WTC11 (cell line): ENCODE measurements at regions of chr4 and their contacts with region 1.

Region 1: DNA sequence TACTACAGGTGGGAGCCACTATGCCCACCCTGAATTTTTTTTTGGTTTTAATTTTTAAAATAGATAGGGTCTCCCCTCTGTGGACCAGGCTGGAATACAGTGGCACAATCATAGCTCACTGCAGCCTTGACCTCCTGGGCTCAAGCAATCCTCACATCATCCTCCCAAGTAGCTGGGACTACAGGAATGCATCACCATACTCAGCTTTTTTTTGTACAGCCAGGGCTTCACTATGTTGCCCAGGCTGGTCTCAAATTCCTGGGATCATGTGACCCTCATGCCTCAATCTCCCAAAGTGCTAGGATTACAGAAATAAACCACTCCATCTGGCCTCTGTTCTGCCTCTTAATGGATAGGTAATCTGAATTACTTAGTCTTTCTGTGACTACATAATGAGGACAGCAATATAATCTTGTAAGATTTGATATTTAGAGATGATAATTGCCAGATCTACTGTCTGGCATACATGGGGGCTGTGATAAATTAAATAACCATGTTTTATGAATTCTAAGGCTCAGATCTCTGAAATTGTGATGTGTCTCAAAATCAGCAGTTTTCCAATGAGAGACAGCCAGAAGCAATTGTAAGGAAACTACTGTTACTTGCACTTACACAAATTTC is 26.7 kb downstream of the PDS5A start:
- DNase-seq: no peak
- ATAC-seq: no peak
- H3K4me3 Mint-ChIP-seq: no peak overlapping the region
- H3K27ac Mint-ChIP-seq: peak overlapping the region; percentile 54; the same call in 1 of the 2 replicates
- H3K4me1 Mint-ChIP-seq: peaks cover 11% of the 10 kb centered on the region
- H3K27me3 Mint-ChIP-seq: no peaks in the 10 kb centered on the region
- CTCF ChIP-seq: no peak

Region 2: DNA sequence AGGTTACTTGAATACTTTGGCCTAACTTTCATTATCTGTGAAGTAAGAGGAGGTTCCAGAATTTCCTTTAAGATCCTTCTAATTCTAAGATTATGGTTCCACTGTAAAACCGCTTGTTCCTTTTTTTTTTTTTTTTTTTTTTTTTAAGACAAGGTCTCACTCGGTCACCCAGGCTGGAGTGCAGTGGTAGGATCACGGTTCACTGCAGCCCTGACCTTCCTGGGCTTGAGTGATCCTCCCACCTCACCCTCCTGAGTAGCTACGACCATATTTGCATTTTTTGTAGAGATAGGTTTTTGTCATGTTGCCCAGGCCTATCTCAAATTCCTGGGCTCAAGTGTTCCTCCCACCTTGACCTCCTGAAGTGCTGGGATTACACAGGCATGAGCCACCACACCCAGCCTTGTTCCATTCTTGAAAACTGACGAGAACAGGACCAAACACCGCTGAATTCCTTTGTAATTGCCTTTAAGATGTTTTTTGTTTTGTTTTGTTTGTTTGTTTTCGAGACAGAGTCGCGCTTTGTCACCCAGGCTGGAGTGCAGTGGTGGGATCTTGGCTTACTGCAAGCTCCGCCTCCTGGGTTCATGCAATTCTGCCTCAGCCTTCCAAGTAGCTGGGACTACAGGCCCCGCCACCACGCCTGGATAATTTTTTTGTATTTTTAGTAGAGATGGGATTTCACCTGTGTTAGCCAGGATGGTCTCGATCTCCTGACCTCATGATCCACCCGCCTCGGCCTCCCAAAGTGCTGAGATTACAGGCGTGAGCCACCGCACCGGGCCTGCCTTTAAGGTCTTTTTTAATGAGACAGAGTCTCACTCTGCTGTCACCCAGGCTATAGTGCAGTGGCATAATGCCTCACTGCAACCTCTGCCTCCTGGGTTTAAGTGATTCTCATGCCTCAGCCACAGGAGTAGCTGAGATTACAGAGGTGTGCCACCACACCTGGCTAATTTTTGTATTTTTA is 20.0 kb after region 1 on chr4:
- CTCF ChIA-PET with region 1: no interaction called
- POLR2A ChIA-PET with region 1: interaction called, 16 read pairs
- DNase-seq: peak; percentile 17
- ATAC-seq: peak; percentile 78
- H3K4me3 Mint-ChIP-seq: no peak overlapping the region
- H3K27ac Mint-ChIP-seq: peak overlapping the region; percentile 91
- H3K4me1 Mint-ChIP-seq: peaks cover 21% of the 10 kb centered on the region
- H3K27me3 Mint-ChIP-seq: no peaks in the 10 kb centered on the region
- CTCF ChIP-seq: no peak